CD4-positive, alpha-beta memory T cell (primary cell): ENCODE measurements at regions of chr2 and their contacts with region 1.

Region 1: DNA sequence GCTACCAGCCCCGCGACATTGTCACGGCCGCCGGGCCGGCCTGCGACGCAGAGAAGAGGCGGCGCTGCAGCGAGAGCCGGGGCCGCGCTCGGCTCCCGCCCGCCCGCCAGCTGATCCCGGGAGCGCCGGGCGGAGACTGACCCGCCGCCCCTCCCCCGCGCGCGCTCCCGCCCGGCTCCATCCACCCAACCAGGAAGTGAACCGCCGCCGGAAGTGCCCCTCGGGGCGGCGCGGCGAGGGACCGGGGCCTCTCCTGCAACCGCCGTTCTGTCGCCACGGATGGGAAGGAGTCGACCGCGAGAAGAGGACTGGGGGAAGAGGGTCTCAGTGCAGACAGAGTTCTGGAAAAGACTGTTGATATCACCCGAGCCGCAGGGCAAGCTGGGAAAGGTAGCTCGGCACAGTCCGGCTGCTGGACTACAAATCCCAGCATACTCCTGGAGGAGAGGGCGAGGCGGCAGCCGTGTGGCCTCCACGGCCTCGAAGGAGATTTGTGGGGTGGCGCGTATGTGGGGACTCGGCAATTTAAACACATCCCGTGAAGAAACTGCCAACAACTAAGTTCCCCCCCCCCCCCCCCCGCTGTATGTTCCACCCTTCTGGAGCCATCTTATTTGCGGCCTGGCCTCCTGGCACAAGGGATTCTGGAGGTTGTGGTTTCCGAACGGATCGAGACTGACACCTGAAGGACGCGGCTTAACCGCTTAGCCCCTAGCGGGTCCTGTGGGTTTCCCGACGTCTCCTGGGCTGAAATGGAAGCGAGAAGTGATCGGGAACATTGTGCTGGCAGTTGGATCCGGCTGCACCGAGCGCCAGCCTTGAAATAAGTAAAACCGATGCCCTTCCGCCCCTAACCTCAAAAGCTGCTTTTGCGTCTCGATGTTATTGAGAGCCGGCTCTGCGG is at the start of gene AAK1:
- DNase-seq: peak; percentile 82 to 90 (median 85)
- H3K4me3 ChIP-seq: peak within 1 kb of the TSS; percentile 91 to 95
- H3K4me3 Mint-ChIP-seq: peak within 1 kb of the TSS; percentile 92 to 99 (median 98)
- H3K27ac ChIP-seq: peak within 1 kb of the TSS; percentile 80
- H3K27ac Mint-ChIP-seq: peak within 1 kb of the TSS; percentile 95 to 99 (median 97)
- H3K4me1 ChIP-seq: peaks cover 68% of the 10 kb centered on the region
- H3K4me1 Mint-ChIP-seq: peaks cover 51 to 71% (median 60%) of the 10 kb centered on the region in 4 donors
- H3K27me3 ChIP-seq: no peaks in the 10 kb centered on the region
- H3K27me3 Mint-ChIP-seq: no peaks in the 10 kb centered on the region
- total RNA-seq, gene AAK1: 220 to 225 TPM

Region 2: DNA sequence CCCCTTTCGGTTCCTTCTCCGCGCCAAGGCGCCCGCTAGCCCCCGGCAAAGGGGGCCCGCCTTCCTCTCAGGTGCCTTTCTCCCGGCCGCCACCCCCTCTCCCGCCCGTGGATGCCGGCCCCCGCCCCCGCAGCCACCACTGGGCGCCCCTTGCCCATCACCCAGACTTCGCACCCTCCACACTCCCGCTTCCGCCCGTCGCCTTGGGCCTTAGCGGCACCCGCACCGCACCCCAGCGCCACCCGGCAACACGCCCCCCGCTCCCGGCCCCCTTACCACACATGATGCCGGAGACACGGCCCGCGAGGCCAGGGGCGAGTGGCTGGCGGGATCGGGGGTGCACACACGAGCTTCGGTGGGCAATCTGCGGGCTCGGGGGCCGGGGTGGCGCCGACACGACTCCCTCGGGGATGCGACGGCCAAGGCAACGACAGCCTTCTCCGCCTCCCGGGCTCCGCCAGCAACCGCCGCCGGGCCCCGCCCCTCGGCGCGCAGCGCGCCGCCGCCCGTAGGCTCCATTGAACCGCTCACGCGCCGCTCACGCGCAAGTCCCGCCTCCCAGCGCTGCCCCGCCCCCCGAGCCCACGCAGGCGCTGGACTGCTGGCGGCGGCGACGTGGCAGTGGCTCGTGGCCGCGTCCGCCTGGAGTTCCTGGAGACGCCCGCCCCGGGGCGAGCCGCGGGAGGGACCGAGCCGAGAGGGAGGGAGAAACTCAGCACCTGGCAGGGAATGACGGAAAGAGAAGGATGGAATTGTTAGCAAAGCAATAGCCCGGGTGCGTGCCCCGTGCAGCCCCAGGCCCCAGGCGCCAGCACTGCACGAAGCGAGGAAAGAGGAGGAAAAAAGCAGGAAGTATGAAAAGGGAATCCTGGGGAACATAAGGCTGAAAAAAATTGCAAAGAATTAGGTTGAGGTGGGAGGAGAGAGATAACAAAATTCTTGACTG is 256.8 kb before region 1 on chr2 and contains the start of gene GFPT1:
- CTCF ChIA-PET with region 1: no interaction called
- POLR2A ChIA-PET with region 1: no interaction called
- intact Hi-C with region 1: loop called (anchors 10 kb)
- DNase-seq: peak; percentile 87 to 91 (median 90)
- H3K4me3 ChIP-seq: peak within 1 kb of the TSS; percentile 66 to 77
- H3K4me3 Mint-ChIP-seq: peak within 1 kb of the TSS; percentile 85 to 91 (median 89)
- H3K27ac ChIP-seq: peak within 1 kb of the TSS; percentile 66
- H3K27ac Mint-ChIP-seq: peak within 1 kb of the TSS; percentile 80 to 97 (median 89)
- H3K4me1 ChIP-seq: peaks cover 38% of the 10 kb centered on the region
- H3K4me1 Mint-ChIP-seq: peaks cover 27 to 50% (median 39%) of the 10 kb centered on the region in 4 donors
- H3K27me3 ChIP-seq: no peaks in the 10 kb centered on the region
- H3K27me3 Mint-ChIP-seq: no peaks in the 10 kb centered on the region
- total RNA-seq, gene GFPT1: 23.1 to 25.8 TPM

Region 3: DNA sequence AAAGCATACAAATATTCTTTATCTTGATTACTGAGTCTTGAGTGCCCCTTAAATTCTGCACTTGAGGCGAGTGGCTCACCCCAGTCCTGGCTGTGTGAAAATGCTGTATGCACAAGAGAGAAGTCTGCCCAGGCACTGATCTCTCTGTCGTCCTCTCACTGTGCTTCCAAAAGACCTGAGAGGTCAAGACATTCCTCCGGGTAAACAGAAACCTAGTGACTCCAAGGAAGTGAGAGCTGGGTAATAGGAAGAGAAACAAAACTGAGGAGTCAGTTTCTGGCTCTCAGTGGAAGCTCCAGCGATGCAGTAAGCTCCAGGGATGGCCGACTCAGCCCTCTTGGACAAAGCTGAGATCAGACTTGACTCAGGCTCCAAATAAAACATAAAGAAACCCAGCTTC is 71.2 kb before region 1 on chr2:
- CTCF ChIA-PET with region 1: interaction called, 79 read pairs
- POLR2A ChIA-PET with region 1: interaction called, 10 read pairs
- intact Hi-C with region 1: loop called (anchors 2 kb)
- DNase-seq: no peak
- H3K4me3 ChIP-seq: no peak overlapping the region
- H3K4me3 Mint-ChIP-seq: peak overlapping the region in 7 of 8 donors; percentile 24 to 64 (median 45)
- H3K27ac ChIP-seq: no peak overlapping the region
- H3K27ac Mint-ChIP-seq: peak overlapping the region; percentile 18 to 85 (median 78)
- H3K4me1 ChIP-seq: peaks cover 88% of the 10 kb centered on the region
- H3K4me1 Mint-ChIP-seq: peaks cover 71 to 96% (median 79%) of the 10 kb centered on the region in 4 donors
- H3K27me3 ChIP-seq: no peaks in the 10 kb centered on the region
- H3K27me3 Mint-ChIP-seq: no peaks in the 10 kb centered on the region

Region 4: GRCh38 chr2:69616756-69617155 is 27.1 kb before region 1 on chr2:
- CTCF ChIA-PET with region 1: interaction called, 8 read pairs
- POLR2A ChIA-PET with region 1: interaction called, 44 read pairs
- intact Hi-C with region 1: loop called (anchors 2 kb)
- DNase-seq: peak; percentile 24 to 87 (median 36)
- H3K4me3 ChIP-seq: no peak overlapping the region
- H3K4me3 Mint-ChIP-seq: peak overlapping the region in 6 of 8 donors; percentile 51 to 79 (median 72)
- H3K27ac ChIP-seq: peak overlapping the region; percentile 20
- H3K27ac Mint-ChIP-seq: peak overlapping the region in 3 of 7 donors; percentile 67 to 93 (median 88)
- H3K4me1 ChIP-seq: peaks cover 99% of the 10 kb centered on the region
- H3K4me1 Mint-ChIP-seq: peaks cover 2 to 43% (median 39%) of the 10 kb centered on the region in 4 donors
- H3K27me3 ChIP-seq: no peaks in the 10 kb centered on the region
- H3K27me3 Mint-ChIP-seq: no peaks in the 10 kb centered on the region

Region 5: GRCh38 chr2:69683101-69683971 is 39.5 kb after region 1 on chr2:
- CTCF ChIA-PET with region 1: interaction called, 20 read pairs
- POLR2A ChIA-PET with region 1: interaction called, 63 read pairs
- intact Hi-C with region 1: no loop called
- DNase-seq: no peak
- H3K4me3 ChIP-seq: no peak overlapping the region
- H3K4me3 Mint-ChIP-seq: peak overlapping the region; percentile 51 to 81 (median 70)
- H3K27ac ChIP-seq: no peak overlapping the region
- H3K27ac Mint-ChIP-seq: peak overlapping the region; percentile 17 to 94 (median 76)
- H3K4me1 ChIP-seq: peaks cover 38% of the 10 kb centered on the region
- H3K4me1 Mint-ChIP-seq: peaks cover 33 to 66% (median 52%) of the 10 kb centered on the region in 4 donors
- H3K27me3 ChIP-seq: no peaks in the 10 kb centered on the region
- H3K27me3 Mint-ChIP-seq: no peaks in the 10 kb centered on the region

Region 6: GRCh38 chr2:69717861-69718273 is 74.0 kb after region 1 on chr2:
- CTCF ChIA-PET with region 1: interaction called, 95 read pairs
- POLR2A ChIA-PET with region 1: interaction called, 56 read pairs
- intact Hi-C with region 1: loop called (anchors 1 kb)
- DNase-seq: no peak
- H3K4me3 ChIP-seq: no peak overlapping the region
- H3K4me3 Mint-ChIP-seq: no peak overlapping the region
- H3K27ac ChIP-seq: no peak overlapping the region
- H3K27ac Mint-ChIP-seq: no peak overlapping the region
- H3K4me1 ChIP-seq: peaks cover 9% of the 10 kb centered on the region
- H3K4me1 Mint-ChIP-seq: peaks cover 8 to 12% (median 10%) of the 10 kb centered on the region in 4 donors
- H3K27me3 ChIP-seq: no peaks in the 10 kb centered on the region
- H3K27me3 Mint-ChIP-seq: no peaks in the 10 kb centered on the region

Region 7: DNA sequence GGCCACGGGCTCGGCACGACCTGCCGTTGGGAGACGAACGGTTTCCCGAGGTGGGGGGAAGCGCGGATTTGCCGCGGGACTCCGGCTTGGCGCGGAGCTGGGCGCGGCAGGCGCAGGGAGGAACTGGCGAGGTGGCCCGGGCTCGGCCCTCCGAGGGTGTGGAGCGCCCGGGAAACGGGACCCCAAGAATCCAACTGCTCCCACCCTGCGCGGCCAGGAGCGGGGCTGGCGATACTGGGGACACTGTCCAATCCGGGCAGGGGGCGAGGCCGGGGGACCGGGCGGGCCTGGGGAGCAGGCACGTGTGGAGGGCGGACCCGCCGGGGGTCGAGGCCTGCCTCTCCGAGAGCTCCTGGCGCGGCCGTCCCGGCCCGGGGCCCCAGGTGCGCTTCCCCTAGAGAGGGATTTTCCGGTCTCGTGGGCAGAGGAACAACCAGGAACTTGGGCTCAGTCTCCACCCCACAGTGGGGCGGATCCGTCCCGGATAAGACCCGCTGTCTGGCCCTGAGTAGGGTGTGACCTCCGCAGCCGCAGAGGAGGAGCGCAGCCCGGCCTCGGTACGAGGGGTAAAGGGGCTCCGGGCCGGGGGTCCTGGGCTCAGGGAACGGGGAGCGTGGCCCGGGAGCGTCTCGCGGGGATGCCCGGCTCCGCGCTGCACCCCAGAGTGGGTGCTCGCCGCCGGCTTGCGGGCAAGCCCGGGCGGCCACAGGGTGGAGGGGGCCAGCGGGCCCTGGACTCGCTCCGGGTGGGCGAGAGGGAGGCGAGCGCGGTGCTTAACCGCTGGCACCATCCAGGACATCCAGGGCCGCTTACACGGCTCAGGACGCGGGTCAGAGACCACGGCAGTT is 98.0 kb after region 1 on chr2 and contains the start of gene ANXA4:
- CTCF ChIA-PET with region 1: no interaction called
- POLR2A ChIA-PET with region 1: interaction called, 14 read pairs
- intact Hi-C with region 1: no loop called
- DNase-seq: peak; percentile 38 to 78 (median 52)
- H3K4me3 ChIP-seq: peak within 1 kb of the TSS; percentile 73 to 83
- H3K4me3 Mint-ChIP-seq: peak within 1 kb of the TSS; percentile 88 to 99 (median 96)
- H3K27ac ChIP-seq: peak within 1 kb of the TSS; percentile 58
- H3K27ac Mint-ChIP-seq: peak within 1 kb of the TSS; percentile 62 to 95 (median 93)
- H3K4me1 ChIP-seq: peaks cover 14% of the 10 kb centered on the region
- H3K4me1 Mint-ChIP-seq: peaks cover 13 to 25% (median 17%) of the 10 kb centered on the region in 4 donors
- H3K27me3 ChIP-seq: no peaks in the 10 kb centered on the region
- H3K27me3 Mint-ChIP-seq: no peaks in the 10 kb centered on the region
- total RNA-seq, gene ANXA4: 22.3 to 24.2 TPM